ENCODE measurements at regions of chr6 and their contacts with region 1.

Region 1: DNA sequence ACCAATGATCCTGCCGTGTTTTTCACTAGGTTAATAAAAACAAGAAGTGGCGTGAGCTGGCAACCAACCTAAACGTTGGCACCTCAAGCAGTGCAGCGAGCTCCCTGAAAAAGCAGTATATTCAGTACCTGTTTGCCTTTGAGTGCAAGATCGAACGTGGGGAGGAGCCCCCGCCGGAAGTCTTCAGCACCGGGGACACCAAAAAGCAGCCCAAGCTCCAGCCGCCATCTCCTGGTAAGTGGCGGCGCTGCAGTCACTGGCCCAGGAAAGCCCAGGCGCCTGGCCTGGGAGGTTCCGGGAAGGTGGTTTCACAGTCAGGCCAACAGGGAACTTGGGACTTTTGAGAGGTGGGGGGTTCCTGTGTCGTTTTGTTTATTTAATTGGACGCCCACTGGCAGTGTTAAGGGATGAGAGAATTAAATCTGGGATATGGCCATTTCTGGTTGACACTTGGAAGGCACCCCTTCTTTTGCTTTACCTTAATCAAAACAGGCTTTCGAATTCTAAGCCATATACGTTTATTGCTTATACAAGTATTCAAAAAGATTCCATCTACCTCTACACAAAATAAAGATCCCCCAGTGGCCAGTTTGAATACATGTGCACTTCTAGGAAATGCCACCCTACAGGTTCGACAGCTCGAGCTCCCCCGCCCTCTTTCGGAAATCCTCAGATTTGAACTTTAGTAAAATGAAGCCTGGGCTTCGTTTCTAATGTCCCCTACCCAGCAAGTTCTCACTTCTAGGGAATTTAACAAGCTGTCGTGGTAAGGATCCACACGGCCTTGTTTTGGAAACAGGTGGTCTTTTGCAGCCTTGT is 138.9 kb downstream of the TMEM242 start:
- DNase-seq: peak; percentile 72
- ATAC-seq: peak; percentile 87
- H3K4me3 Mint-ChIP-seq: no peak overlapping the region
- H3K27ac Mint-ChIP-seq: no peak overlapping the region
- H3K4me1 Mint-ChIP-seq: peaks cover 17% of the 10 kb centered on the region
- H3K27me3 Mint-ChIP-seq: no peaks in the 10 kb centered on the region

Region 2: GRCh38 chr6:157034436-157035230 is 149.8 kb before region 1 on chr6:
- CTCF ChIA-PET with region 1: interaction called, 20 read pairs
- DNase-seq: no peak
- ATAC-seq: peak; percentile 68
- H3K4me3 Mint-ChIP-seq: peak overlapping the region; percentile 43
- H3K27ac Mint-ChIP-seq: peak overlapping the region; percentile 54
- H3K4me1 Mint-ChIP-seq: peaks cover 16% of the 10 kb centered on the region
- H3K27me3 Mint-ChIP-seq: no peaks in the 10 kb centered on the region

Region 3: DNA sequence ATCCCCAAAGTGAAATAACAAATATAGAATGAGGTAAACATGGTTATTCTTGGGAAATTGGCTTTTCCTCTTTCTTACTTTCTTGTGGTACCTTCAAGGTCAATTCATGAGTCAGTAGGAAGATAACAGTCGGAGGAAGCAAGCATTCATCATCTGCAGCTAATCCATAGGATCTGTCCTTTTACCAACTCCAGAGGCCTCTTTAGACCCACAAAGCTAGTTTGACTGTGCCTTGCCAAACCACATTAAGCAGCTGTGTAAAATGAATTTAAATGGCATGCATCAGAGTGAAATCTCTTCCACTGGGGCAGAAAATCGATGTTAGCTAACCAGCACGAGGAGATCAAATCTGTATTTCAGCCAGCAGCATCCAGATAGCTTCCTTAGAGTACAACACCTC is 32.4 kb before region 1 on chr6:
- CTCF ChIA-PET with region 1: no interaction called
- DNase-seq: no peak
- ATAC-seq: no peak
- H3K4me3 Mint-ChIP-seq: no peak overlapping the region
- H3K27ac Mint-ChIP-seq: no peak overlapping the region
- H3K4me1 Mint-ChIP-seq: peaks cover 20% of the 10 kb centered on the region
- H3K27me3 Mint-ChIP-seq: no peaks in the 10 kb centered on the region

Region 4: DNA sequence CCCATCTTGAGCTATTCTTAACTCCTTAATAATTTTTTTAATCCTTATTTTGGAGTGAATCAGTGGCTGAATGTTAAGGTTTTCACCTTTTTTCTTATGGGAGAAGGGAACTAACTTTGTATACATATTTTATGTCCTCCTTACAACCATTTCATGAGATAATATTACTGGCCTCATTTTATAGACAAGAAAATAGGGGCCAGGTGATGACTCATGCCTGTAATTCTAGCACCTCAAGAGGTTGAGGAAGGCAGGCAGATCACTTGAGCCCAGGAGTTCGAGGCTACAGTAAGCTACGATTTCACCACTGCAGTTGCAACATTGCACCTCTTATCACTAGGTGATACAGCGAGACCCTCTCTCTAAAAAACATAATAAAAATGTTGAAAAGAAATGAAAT is 10.2 kb after region 1 on chr6:
- CTCF ChIA-PET with region 1: interaction called, 10 read pairs
- DNase-seq: no peak
- ATAC-seq: no peak
- H3K4me3 Mint-ChIP-seq: no peak overlapping the region
- H3K27ac Mint-ChIP-seq: no peak overlapping the region
- H3K4me1 Mint-ChIP-seq: no peaks in the 10 kb centered on the region
- H3K27me3 Mint-ChIP-seq: no peaks in the 10 kb centered on the region